Activated CD4-positive, alpha-beta T cell treated with anti-CD3 and anti-CD28 coated beads for 36 hours (primary cell): ENCODE measurements at regions of chr15 and their contacts with region 1.

Region 1: GRCh38 chr15:45705510-45706473 is 71.0 kb downstream of the SQOR start:
- DNase-seq: peak; percentile 84
- ATAC-seq: peak; percentile 89
- H3K4me3 Mint-ChIP-seq: peak overlapping the region; percentile 80
- H3K27ac Mint-ChIP-seq: peak overlapping the region; percentile 76
- H3K4me1 Mint-ChIP-seq: peaks cover 14% of the 10 kb centered on the region
- H3K27me3 Mint-ChIP-seq: peaks cover 3% of the 10 kb centered on the region

Region 2: GRCh38 chr15:45372041-45372995 is 333.5 kb before region 1 on chr15:
- CTCF ChIA-PET with region 1: no interaction called
- POLR2A ChIA-PET with region 1: no interaction called
- intact Hi-C with region 1: no loop called
- DNase-seq: no peak
- ATAC-seq: no peak
- H3K4me3 Mint-ChIP-seq: no peak overlapping the region
- H3K27ac Mint-ChIP-seq: no peak overlapping the region
- H3K4me1 Mint-ChIP-seq: peaks cover 6% of the 10 kb centered on the region
- H3K27me3 Mint-ChIP-seq: peaks cover 22% of the 10 kb centered on the region

Region 3: DNA sequence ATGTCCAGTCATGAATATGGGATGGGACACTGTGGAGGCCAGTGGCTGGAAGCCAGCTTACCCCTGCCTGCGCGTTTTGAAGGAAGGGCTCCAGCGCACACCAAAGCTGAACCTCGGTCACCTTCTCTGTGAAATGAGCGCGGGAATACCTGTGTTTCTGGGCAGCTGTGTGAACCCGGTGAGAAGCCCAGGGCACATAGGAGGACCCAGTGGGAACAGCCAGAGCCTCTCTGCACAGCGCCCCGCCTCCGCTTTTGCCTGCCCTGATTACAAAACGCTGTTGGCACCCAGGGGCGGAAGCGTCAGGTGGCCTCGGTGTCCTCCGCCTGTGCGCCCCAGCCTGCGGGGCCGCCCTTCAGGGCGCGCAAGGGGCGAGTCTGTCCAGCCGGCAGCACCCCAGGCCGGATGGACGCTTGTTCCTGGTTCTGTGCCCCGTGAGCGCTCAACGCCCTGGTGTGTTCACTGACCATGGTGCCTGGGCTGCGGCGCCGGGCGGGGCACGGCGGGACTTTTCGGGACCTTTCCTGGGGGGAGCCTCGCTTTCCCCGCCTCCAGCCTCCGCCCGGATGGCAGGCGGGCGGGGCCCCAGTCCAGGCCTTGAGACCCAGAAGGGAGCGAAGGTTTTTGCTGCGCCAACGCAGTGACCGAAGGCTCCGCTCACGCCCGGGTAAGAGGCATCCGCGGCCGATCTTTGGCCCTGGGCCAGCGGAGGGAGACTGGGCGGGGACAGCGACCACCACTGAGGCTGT is 71.2 kb before region 1 on chr15 and contains the start of gene SQOR:
- CTCF ChIA-PET with region 1: interaction called, 3 read pairs
- POLR2A ChIA-PET with region 1: no interaction called
- intact Hi-C with region 1: loop called in 1 of 2 experiments (anchors 2 kb)
- DNase-seq: peak; percentile 86
- ATAC-seq: peak; percentile 66
- H3K4me3 Mint-ChIP-seq: peak within 1 kb of the TSS; percentile 96
- H3K27ac Mint-ChIP-seq: peak within 1 kb of the TSS; percentile 90
- H3K4me1 Mint-ChIP-seq: peaks cover 32% of the 10 kb centered on the region
- H3K27me3 Mint-ChIP-seq: no peaks in the 10 kb centered on the region
- total RNA-seq, gene SQOR: 105 to 108 TPM

Region 4: DNA sequence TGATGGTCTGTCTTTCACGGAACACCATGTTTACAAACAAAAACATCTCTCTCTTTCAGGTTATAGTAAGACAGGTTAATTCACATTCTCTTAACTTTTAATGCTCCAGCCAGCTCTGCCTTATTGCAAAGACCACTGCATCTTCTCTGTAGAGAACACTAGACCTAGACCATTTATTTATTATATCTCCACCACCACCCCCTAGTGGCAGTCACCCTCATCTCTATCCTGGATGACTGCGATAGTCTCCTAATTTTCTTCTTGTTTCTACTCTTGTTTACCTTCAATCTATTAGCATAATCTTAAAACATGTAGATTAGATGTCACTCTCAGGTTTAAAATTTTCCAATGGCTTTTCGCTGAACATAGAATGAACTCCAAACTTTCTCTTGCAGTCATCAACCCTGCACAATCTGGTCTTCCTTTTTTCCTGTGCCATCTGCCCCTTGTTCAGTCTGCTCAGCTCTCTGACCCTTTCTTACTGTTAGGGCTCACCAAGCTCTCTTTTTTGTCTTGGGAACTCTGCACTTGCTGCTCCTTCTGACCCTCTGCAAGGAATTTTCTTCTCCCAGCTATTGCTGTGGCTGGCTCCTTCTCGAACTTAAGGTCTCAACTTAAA is 84.6 kb after region 1 on chr15:
- CTCF ChIA-PET with region 1: interaction called, 10 read pairs
- POLR2A ChIA-PET with region 1: no interaction called
- intact Hi-C with region 1: loop called (anchors 2 to 5 kb)
- DNase-seq: peak; percentile 49
- ATAC-seq: no peak
- H3K4me3 Mint-ChIP-seq: no peak overlapping the region
- H3K27ac Mint-ChIP-seq: no peak overlapping the region
- H3K4me1 Mint-ChIP-seq: no peaks in the 10 kb centered on the region
- H3K27me3 Mint-ChIP-seq: peaks cover 19% of the 10 kb centered on the region

Region 5: DNA sequence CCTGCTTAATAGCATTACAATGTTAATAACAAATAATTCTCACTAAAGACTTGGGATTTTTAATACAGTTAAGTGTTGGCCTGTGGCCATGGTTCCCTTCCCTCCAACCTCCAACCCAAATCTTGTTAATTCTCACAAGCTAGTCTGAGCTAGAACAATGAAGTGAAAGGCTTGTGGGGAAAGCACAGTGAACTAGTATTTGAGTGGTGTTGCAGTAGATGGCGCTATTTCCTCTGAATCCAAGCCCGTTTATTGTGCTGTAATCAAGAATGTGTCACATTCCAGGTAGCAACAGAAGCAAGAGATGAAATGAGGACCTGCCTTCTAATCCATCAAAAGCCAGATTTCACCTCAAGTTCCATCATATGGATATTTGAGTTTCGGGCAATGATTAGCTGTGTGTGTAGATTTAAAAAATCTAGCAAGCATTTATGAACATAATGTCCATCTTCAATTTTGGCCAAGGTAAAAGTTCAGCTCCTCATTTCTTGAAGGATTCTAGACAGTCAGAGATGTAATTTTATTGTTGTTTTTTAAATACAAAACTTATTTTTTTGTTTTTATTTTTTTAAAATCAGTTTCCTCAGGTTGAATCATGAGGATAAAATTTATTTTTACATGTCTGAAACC is 89.8 kb after region 1 on chr15:
- CTCF ChIA-PET with region 1: interaction called, 10 read pairs
- POLR2A ChIA-PET with region 1: no interaction called
- intact Hi-C with region 1: loop called (anchors 2 to 5 kb)
- DNase-seq: peak; percentile 34
- ATAC-seq: no peak
- H3K4me3 Mint-ChIP-seq: no peak overlapping the region
- H3K27ac Mint-ChIP-seq: no peak overlapping the region
- H3K4me1 Mint-ChIP-seq: no peaks in the 10 kb centered on the region
- H3K27me3 Mint-ChIP-seq: peaks cover 19% of the 10 kb centered on the region